Activated CD4-positive, alpha-beta T cell treated with anti-CD3 and anti-CD28 coated beads, Interleukin-2, amount 10 ng/mL, durations not matched to agents 24 days and 14 days (primary cell): ENCODE measurements at regions of chr15 and their contacts with region 1.

Region 1: DNA sequence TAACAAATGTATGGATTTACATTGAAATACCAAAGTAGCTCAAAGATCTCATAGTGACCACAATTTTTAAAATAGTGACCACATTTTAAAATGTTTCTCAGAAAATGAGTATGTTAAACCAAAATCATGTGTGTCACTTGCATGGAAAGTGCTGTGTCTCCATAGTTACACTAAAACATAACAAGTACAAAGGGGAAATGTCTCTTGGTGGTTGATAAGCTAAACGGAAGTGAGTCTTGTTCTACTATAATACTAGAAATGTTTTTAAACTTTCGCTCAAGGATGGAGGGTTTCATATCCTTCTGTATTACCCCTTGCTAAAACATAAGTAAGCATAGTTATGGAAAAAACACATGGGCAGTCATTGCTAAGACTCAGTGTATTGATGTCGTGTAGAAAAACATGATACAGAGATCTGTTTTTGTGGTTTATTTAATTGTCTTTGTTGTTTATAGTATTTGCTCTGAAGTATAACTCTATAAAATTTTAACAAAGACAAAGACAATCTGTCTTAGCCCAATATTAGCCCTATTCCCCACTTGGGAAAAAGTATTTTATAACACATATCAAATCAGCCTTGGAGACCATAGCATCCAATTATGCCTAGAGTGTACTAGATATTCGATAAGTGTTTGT is 27.0 kb upstream of the DENND4A start:
- DNase-seq: peak; percentile 81
- H3K4me3 Mint-ChIP-seq: peak overlapping the region; percentile 61
- H3K27ac Mint-ChIP-seq: peak overlapping the region; percentile 85
- H3K4me1 Mint-ChIP-seq: peaks cover 44% of the 10 kb centered on the region
- H3K27me3 Mint-ChIP-seq: no peaks in the 10 kb centered on the region

Region 2: GRCh38 chr15:65761210-65761926 is 57.7 kb before region 1 on chr15:
- intact Hi-C with region 1: loop called (anchors 2 kb)
- DNase-seq: no peak
- H3K4me3 Mint-ChIP-seq: peak overlapping the region; percentile 62
- H3K27ac Mint-ChIP-seq: peak overlapping the region; percentile 62
- H3K4me1 Mint-ChIP-seq: peaks cover 14% of the 10 kb centered on the region
- H3K27me3 Mint-ChIP-seq: no peaks in the 10 kb centered on the region

Region 3: DNA sequence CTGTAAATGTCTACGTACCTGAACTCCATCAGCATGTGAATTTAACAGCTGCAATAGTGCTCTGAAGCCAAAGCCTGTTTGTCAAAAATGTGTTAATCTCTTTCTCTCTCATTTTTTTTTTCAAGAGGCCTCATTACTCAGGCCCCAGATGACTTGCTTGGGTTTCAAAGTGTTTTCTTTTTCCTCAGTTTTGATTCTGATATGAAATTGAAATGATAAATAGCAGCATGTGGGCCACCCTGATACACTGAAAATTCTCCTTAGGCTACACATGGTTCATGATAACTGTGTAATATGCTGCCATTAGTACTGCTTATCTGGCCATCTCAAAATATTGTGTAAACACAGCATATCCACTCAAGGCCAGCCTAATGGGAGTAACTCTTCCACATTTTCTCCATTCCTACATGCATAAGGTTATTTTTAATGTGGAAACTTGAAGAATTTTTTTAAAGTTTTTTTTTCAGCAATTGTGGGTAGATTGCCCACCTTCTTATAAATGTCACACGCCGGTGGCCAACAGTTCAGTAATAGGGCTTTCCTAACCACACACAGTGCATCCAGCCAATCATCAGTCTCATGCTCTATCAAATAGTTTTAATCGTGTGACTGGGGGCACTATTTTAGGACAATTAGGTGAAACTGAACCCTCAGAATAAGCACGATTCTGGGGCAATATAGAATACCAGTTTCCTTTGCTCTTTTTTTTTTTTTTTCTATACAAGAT is 13.9 kb before region 1 on chr15:
- intact Hi-C with region 1: loop called (anchors 1 kb)
- DNase-seq: no peak
- H3K4me3 Mint-ChIP-seq: no peak overlapping the region
- H3K27ac Mint-ChIP-seq: peak overlapping the region; percentile 66
- H3K4me1 Mint-ChIP-seq: peaks cover 33% of the 10 kb centered on the region
- H3K27me3 Mint-ChIP-seq: no peaks in the 10 kb centered on the region

Region 4: DNA sequence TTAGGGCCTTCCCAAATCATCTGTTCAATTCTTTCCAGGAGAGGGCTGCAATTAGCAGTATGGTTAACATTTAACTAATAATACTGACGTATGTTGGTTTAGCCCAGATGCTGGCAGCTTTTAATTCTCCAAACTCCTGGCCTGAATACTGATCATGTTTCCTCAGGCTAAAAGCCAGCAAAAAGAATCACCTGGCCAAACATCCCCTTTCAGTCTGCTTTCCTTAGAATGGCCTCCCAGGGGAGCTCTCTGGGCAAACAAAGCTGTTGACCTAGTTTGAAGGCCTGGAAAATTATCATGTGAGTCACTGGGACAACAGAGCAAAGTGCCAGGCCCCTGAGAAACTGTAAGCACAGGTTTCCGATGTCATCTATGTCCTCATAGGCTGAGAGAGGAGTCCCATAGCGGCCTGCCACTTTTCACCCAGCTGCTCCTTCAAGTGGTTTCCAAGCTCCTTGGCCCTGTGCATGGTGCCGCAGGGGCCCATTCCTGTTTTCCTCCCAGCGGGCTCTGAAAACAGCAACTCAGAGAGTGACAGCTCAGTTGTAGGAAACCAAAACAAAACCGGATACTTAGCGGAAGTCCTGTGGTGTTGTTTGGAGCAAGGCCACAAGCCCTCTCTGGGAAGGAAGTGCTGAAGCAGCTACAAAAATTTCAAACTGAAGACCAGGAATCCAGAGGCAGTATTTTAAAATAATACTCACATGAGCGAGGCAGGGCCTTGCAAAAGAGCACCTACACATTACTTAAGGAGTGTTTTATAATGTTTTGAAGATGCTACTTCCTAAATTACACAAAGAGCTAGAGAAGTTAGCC is 13.7 kb after region 1 on chr15:
- intact Hi-C with region 1: loop called (anchors 2 kb)
- DNase-seq: peak; percentile 90
- H3K4me3 Mint-ChIP-seq: peak overlapping the region; percentile 84
- H3K27ac Mint-ChIP-seq: peak overlapping the region; percentile 99
- H3K4me1 Mint-ChIP-seq: peaks cover 48% of the 10 kb centered on the region
- H3K27me3 Mint-ChIP-seq: no peaks in the 10 kb centered on the region

Region 5: GRCh38 chr15:65845826-65846519 is 26.9 kb after region 1 on chr15:
- intact Hi-C with region 1: no loop called
- DNase-seq: no peak
- H3K4me3 Mint-ChIP-seq: no peak overlapping the region
- H3K27ac Mint-ChIP-seq: no peak overlapping the region
- H3K4me1 Mint-ChIP-seq: no peaks in the 10 kb centered on the region
- H3K27me3 Mint-ChIP-seq: peaks cover 9% of the 10 kb centered on the region

Region 6: GRCh38 chr15:65887565-65887964 is 68.5 kb after region 1 on chr15:
- intact Hi-C with region 1: loop called (anchors 5 kb)
- DNase-seq: peak; percentile 91
- H3K4me3 Mint-ChIP-seq: peak overlapping the region; percentile 66
- H3K27ac Mint-ChIP-seq: peak overlapping the region; percentile 90
- H3K4me1 Mint-ChIP-seq: peaks cover 66% of the 10 kb centered on the region
- H3K27me3 Mint-ChIP-seq: no peaks in the 10 kb centered on the region

Region 7: DNA sequence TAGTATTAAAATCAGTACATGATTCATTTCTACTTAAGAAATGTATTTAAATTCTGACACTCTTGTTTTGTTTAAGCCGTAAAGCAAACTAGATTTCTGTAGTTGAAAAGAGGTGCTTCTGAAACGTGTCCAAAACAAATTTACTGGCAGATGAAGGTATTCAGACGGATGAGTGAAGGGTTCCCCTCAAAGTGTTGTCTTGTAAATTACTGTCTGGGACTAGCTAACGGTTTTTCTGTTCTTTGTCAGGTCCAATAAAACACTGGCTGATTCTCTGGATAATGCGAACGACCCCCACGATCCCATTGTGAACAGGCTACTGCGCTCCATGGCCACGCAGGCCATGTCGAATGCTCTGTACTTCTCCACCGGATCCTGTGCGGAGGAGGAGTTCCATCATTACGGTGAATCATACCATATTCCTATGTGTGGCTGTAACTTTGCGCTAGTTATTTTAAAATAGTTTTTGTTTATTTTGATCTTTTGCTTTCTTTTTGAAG is 509.7 kb after region 1 on chr15:
- intact Hi-C with region 1: no loop called
- DNase-seq: no peak
- H3K4me3 Mint-ChIP-seq: no peak overlapping the region
- H3K27ac Mint-ChIP-seq: no peak overlapping the region
- H3K4me1 Mint-ChIP-seq: no peaks in the 10 kb centered on the region
- H3K27me3 Mint-ChIP-seq: no peaks in the 10 kb centered on the region